Naive thymus-derived CD8-positive, alpha-beta T cell (primary cell): ENCODE measurements at regions of chr10 and their contacts with region 1.

Region 1: GRCh38 chr10:86521678-86522509 is at the start of gene WAPL:
- DNase-seq: peak; percentile 90 to 97 (median 94)
- ATAC-seq: peak; percentile 94
- H3K4me3 Mint-ChIP-seq: peak within 1 kb of the TSS; percentile 90 to 97 (median 96)
- H3K27ac Mint-ChIP-seq: peak within 1 kb of the TSS; percentile 86 to 98 (median 95)
- H3K4me1 Mint-ChIP-seq: peaks cover 23 to 74% (median 62%) of the 10 kb centered on the region in 4 donors
- H3K27me3 Mint-ChIP-seq: no peaks in the 10 kb centered on the region
- polyA plus RNA-seq, gene WAPL: 37.0 to 42.1 (median 38.6) TPM

Region 2: DNA sequence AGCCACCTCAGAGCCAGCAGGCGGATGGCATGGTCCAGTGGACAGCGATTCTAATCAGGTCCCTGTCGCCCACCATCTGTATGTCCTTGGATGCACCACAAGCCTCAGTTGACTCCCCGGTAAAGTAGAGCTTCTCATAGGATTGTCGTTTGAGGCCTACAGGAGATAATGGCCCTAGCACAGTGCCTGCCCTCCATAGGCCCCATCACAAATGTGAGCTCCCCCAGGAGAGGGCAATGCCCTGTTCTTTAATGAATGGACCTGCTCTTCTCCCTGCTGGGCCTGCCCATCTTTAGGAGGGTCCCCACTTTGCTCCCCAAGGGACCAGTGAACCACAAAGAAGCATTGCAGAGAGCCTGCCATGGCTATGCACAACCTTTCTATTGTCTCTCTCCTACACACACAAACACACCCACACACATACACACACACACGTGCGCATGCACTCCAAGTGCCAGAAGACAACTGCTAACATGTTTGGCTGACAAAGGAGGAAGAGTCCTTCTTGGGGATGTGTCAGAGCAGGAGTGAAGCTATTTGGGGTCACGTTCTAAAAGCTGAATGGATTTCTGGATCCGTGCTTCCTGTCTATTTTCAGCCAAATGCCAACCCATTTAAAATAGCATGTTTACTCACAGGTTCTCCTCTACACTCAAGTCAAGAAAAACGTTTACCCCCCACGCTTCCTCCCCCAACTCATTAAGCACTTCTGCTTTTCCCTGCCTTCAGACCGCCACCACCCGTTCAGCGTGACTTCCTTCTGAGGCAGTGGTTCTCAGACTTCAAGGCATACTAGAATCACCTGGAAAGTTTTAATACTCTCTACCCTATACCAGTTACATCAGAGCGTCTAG is 351.4 kb before region 1 on chr10:
- POLR2A ChIA-PET with region 1: no interaction called
- DNase-seq: no peak
- ATAC-seq: no peak
- H3K4me3 Mint-ChIP-seq: no peak overlapping the region
- H3K27ac Mint-ChIP-seq: no peak overlapping the region
- H3K4me1 Mint-ChIP-seq: no peaks in the 10 kb centered on the region
- H3K27me3 Mint-ChIP-seq: peaks cover 0 to 18% (median 2%) of the 10 kb centered on the region in 5 donors

Region 3: DNA sequence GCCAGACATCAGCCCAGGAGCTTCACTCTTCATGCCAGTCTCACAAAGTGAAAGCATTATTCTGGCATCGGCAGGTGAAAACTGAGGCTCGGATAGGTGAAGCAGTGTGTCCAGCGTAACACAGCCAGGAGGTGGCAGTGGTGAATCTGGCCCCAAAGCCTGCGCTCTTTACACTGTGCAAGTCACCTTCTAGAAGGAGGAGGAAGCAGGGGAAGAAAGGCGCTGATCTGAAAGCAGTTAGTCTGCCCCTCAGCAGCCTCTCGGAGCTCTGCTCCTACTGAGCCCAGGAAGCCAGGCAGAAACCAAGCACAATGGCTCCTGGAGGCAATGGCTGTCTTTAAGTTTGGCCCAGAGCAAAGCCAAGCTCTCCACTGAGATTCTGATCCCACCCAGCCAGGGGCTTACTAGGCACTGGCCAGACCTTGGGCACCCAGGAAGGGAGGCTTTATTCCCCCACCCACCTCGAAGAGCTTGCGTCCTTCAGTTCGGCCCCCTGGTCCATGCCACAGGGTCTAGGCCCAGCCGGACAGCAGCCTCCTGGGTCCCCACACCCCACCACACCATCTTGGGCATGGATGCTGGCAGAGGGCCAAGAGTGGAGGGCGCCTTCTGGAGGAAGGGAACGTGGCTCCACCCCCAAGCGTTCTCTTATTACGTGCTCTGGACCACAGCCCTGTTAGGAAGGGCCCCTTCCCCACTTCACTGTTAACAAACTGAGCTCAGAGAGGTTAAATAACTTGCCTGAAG is 259.8 kb before region 1 on chr10:
- POLR2A ChIA-PET with region 1: no interaction called
- DNase-seq: peak in 1 of 10 donors; percentile 12
- ATAC-seq: peak in 1 of 2 donors; percentile 44
- H3K4me3 Mint-ChIP-seq: peak overlapping the region in 1 of 10 donors; percentile 18
- H3K27ac Mint-ChIP-seq: no peak overlapping the region
- H3K4me1 Mint-ChIP-seq: peaks cover 0 to 7% (median 5%) of the 10 kb centered on the region in 4 donors
- H3K27me3 Mint-ChIP-seq: peaks cover 11 to 35% (median 26%) of the 10 kb centered on the region in 5 donors

Region 4: DNA sequence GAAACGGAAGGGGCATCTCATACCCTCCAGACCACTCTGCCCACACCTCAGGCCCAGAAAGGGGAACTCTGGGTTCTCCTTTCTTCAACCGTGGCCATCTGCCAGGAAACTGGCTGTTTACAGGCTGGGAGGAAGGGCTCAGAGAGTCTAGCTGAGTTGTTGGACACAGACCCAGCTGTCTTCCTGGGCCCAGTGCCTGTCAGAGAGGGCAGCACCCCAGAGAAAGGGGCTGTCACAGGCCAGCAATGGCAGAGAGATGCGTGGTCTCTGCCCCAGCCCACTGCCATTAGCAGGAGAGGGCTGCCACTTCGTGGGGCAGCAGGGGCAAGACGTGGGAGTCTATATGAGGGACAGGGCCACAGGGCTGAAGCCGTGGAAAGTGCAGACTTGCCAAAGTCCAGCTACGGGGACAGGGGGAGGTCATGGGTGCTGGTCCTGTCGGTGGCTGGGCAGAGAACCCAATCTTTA is 166.3 kb before region 1 on chr10:
- POLR2A ChIA-PET with region 1: no interaction called
- DNase-seq: peak in 1 of 10 donors; percentile 44
- ATAC-seq: no peak
- H3K4me3 Mint-ChIP-seq: no peak overlapping the region
- H3K27ac Mint-ChIP-seq: no peak overlapping the region
- H3K4me1 Mint-ChIP-seq: peaks cover 0 to 24% (median 0%) of the 10 kb centered on the region in 4 donors
- H3K27me3 Mint-ChIP-seq: peaks cover 4 to 30% (median 8%) of the 10 kb centered on the region in 5 donors

Region 5: GRCh38 chr10:86535057-86535882 is 13.4 kb after region 1 on chr10:
- POLR2A ChIA-PET with region 1: interaction called, 24 read pairs
- DNase-seq: peak in 1 of 10 donors; percentile 14
- ATAC-seq: no peak
- H3K4me3 Mint-ChIP-seq: peak overlapping the region in 8 of 10 donors; percentile 6 to 85 (median 74)
- H3K27ac Mint-ChIP-seq: peak overlapping the region in 7 of 10 donors; percentile 66 to 92 (median 77)
- H3K4me1 Mint-ChIP-seq: peaks cover 20 to 42% (median 34%) of the 10 kb centered on the region in 4 donors
- H3K27me3 Mint-ChIP-seq: peaks cover 0 to 2% (median 0%) of the 10 kb centered on the region in 5 donors